H1 (cell line): ENCODE measurements at regions of chr20 and their contacts with region 1.

Region 1: DNA sequence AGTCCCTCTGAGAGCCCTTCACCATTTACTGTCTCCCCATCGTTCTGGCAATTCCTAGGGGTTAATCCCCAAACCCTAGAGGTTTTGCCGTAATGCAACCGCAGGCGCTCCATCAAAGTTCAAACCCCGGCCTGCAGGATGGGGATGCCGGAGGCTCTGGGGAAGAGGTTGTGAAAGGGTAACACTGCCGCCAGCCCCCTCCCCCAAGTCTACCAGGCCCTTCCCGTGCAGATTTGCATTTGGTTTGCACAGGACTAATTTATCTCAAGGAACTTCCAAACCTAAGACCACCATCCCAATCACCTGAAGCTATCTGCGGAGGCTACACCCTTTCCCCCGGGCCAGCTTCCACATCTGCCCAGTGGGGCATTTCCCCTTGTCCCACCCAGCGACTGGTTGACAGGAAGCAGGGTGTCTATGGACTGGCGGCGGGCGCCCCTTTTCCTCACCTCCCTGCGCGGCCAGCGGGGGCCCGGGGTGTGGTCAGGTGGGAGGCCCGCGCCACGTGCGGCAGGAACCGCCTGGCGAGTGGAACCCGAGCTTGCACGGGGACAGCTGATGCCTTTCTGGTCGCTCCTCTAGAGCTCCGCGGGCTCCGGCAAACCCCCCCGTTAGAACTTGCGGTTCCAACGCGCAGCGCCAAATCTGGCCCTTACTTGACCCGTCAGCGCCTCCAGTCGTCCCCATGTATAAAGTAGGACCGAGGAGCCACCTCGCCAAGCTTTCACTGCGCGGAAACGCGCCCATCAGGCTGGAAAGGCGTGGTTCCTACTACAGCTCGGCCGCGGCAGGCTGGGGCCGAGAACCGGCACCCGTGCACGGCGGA is 9.4 kb upstream of the SLC4A11 start:
- DNase-seq: peak in 1 of 2 experiments; percentile 74
- H3K4me3 ChIP-seq: peak overlapping the region; percentile 9 to 61 (median 40)
- H3K27ac ChIP-seq: no peak overlapping the region
- H3K4me1 ChIP-seq: peaks cover 0 to 5% (median 1%) of the 10 kb centered on the region in 4 experiments; a peak in 3 of 7 replicates
- H3K27me3 ChIP-seq: peaks cover 0 to 24% (median 18%) of the 10 kb centered on the region in 4 experiments; a peak in 6 of 7 replicates
- CTCF ChIP-seq: peak in 2 of 3 experiments; percentile 12 to 23; a peak in 2 of 4 replicates
- EP300 ChIP-seq: no peak
- POLR2A ChIP-seq: no peak
- RAD21 ChIP-seq: peak; percentile 21 to 44; a peak in 1 of 4 replicates

Region 2: GRCh38 chr20:3218307-3218988 is 29.9 kb before region 1 on chr20:
- CTCF ChIA-PET with region 1: interaction called, 158 read pairs
- POLR2A ChIA-PET with region 1: interaction called, 46 read pairs
- DNase-seq: peak in 1 of 2 experiments; percentile 98
- H3K4me3 ChIP-seq: no peak overlapping the region
- H3K27ac ChIP-seq: no peak overlapping the region
- H3K4me1 ChIP-seq: peaks cover 0 to 2% (median 0%) of the 10 kb centered on the region in 4 experiments; a peak in 2 of 7 replicates
- H3K27me3 ChIP-seq: no peaks in the 10 kb centered on the region
- CTCF ChIP-seq: peak; percentile 86 to 90 (median 89)
- EP300 ChIP-seq: peak in 1 of 2 experiments; percentile 19; a peak in 1 of 3 replicates
- POLR2A ChIP-seq: no peak
- RAD21 ChIP-seq: peak; percentile 72 to 88

Region 3: GRCh38 chr20:3227506-3227905 is 20.9 kb before region 1 on chr20:
- CTCF ChIA-PET with region 1: interaction called, 158 read pairs
- POLR2A ChIA-PET with region 1: interaction called, 46 read pairs
- DNase-seq: no peak
- H3K4me3 ChIP-seq: no peak overlapping the region
- H3K27ac ChIP-seq: no peak overlapping the region; the same call in 1 of the 2 replicates
- H3K4me1 ChIP-seq: no peaks in the 10 kb centered on the region; a peak in 1 of 7 replicates
- H3K27me3 ChIP-seq: no peaks in the 10 kb centered on the region
- CTCF ChIP-seq: no peak
- EP300 ChIP-seq: no peak
- POLR2A ChIP-seq: no peak
- RAD21 ChIP-seq: no peak

Region 4: DNA sequence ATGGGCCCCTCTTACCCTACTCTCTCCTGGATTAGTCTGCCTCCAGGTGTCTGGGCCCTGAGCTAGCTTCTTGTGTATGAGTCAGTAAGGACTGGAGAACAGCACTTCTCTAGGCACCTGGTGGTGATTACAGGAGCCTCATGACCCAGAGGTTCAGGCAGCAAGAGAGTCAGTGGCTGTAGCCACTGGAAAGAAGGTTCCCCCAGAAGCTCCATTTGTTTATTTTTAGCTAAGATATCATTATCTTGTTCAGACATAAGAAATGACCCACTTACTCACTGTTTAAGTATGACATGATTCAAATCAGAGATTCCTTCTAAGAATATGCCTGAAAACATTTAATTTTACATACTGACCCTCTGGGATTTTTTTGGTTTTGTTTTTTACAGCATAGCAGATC is 14.2 kb after region 1 on chr20:
- CTCF ChIA-PET with region 1: interaction called, 46 read pairs
- POLR2A ChIA-PET with region 1: interaction called, 3 read pairs
- DNase-seq: no peak
- H3K4me3 ChIP-seq: no peak overlapping the region
- H3K27ac ChIP-seq: no peak overlapping the region
- H3K4me1 ChIP-seq: no peaks in the 10 kb centered on the region
- H3K27me3 ChIP-seq: no peaks in the 10 kb centered on the region
- CTCF ChIP-seq: no peak
- EP300 ChIP-seq: no peak
- POLR2A ChIP-seq: no peak
- RAD21 ChIP-seq: no peak

Region 5: DNA sequence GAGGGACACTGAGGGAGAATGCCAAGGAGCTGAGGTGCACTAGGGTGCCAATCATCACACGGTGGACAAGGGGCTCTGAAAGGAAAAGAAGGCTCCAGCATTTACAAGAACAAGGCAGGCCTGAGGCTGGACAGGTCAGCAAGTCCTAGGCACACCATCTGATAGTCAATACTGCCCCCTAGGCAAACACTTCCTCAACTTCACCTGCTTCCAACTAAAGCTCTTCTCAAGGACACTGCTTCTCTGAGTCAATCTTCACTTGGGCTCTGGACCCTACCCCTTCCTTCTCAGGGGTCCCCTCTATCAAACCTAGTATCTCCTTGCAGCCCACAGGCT is 28.3 kb after region 1 on chr20:
- CTCF ChIA-PET with region 1: interaction called, 111 read pairs
- POLR2A ChIA-PET with region 1: no interaction called
- DNase-seq: no peak
- H3K4me3 ChIP-seq: no peak overlapping the region
- H3K27ac ChIP-seq: no peak overlapping the region
- H3K4me1 ChIP-seq: no peaks in the 10 kb centered on the region
- H3K27me3 ChIP-seq: no peaks in the 10 kb centered on the region
- CTCF ChIP-seq: peak; percentile 33 to 74 (median 67)
- EP300 ChIP-seq: no peak
- POLR2A ChIP-seq: no peak
- RAD21 ChIP-seq: peak; percentile 66 to 80

Region 6: DNA sequence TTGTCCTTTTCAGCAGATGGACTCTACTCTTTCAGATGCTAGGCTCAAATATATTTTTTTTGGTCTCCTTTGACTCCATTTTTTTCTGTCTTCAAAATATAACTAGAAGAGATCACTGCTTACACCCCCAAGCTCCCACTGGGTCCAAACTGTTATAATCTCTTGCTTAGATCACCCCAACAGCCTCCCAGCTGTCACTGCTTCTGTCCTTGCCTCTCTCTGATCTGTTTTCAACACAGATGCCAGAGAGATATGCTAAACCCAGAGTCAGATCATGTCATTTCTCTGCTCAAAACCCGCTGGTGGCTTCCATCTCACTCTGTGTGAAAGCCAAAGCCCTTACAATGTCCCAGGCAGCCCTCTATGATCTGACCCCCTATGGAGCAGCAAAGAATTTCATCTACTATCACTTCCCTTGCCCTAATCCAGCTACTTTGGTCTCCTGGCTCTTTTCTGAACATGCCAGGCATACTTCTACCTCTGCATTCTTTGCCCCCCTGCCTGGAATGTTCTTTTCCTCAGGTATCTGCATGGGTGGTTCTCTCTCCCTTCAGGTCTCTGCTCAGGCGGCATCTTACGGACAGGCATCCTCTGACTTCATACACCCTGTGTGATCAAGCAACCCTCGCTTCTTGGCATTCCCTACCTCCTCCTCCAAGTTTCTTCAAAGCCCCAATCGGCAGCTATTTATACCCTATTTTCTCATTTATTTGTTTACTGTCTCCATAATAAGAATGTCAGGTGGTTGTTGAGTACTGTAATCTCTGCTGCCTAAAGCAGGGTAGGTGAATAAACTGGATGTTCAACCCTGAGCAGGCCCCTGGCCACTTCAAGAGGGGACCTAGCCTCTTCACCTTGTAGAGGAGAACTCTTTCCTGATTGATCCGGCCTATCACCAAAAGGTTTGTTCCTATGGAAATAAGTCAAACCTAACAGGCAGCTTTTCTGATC is 34.2 kb after region 1 on chr20:
- CTCF ChIA-PET with region 1: interaction called, 111 read pairs
- POLR2A ChIA-PET with region 1: interaction called, 3 read pairs
- DNase-seq: peak in 1 of 2 experiments; percentile 10
- H3K4me3 ChIP-seq: no peak overlapping the region
- H3K27ac ChIP-seq: no peak overlapping the region; the same call in 1 of the 2 replicates
- H3K4me1 ChIP-seq: peaks cover 0 to 8% (median 5%) of the 10 kb centered on the region in 4 experiments; a peak in 1 of 7 replicates
- H3K27me3 ChIP-seq: no peaks in the 10 kb centered on the region
- CTCF ChIP-seq: no peak
- EP300 ChIP-seq: no peak
- POLR2A ChIP-seq: no peak
- RAD21 ChIP-seq: no peak

Region 7: GRCh38 chr20:3312940-3313682 is 64.7 kb after region 1 on chr20:
- CTCF ChIA-PET with region 1: interaction called, 47 read pairs
- POLR2A ChIA-PET with region 1: no interaction called
- DNase-seq: no peak
- H3K4me3 ChIP-seq: no peak overlapping the region
- H3K27ac ChIP-seq: no peak overlapping the region
- H3K4me1 ChIP-seq: no peaks in the 10 kb centered on the region; a peak in 1 of 7 replicates
- H3K27me3 ChIP-seq: no peaks in the 10 kb centered on the region
- CTCF ChIP-seq: no peak
- EP300 ChIP-seq: no peak
- POLR2A ChIP-seq: no peak
- RAD21 ChIP-seq: no peak

Region 8: DNA sequence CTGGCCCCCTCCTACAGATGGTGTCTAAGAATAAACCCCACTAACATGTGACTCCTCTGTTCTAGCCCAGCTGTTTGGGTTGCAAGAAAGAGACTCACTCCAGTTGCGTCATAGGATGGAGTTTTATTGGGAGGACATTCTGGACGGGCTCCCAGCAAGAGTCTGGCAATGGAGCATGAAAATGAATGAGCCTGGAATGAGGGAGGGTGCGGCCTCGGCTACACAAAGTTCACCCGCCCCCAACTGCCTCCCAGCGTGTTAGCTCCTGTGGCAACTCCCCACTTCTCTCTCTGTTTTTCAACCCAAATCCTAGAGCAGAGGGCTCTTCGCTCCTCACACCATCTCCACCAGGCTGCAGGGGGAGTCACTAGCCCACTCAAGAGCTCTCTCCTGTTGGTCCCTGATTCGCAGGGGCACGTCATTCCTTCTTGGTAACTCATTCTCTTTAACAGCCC is 438.5 kb after region 1 on chr20:
- CTCF ChIA-PET with region 1: no interaction called
- POLR2A ChIA-PET with region 1: no interaction called
- DNase-seq: no peak
- H3K4me3 ChIP-seq: no peak overlapping the region
- H3K27ac ChIP-seq: no peak overlapping the region
- H3K4me1 ChIP-seq: peaks cover 3 to 10% (median 5%) of the 10 kb centered on the region in 4 experiments
- H3K27me3 ChIP-seq: peaks cover 0 to 9% (median 7%) of the 10 kb centered on the region in 4 experiments; a peak in 6 of 7 replicates
- CTCF ChIP-seq: peak; percentile 5 to 14 (median 8); a peak in 3 of 4 replicates
- EP300 ChIP-seq: no peak
- POLR2A ChIP-seq: no peak
- RAD21 ChIP-seq: peak in 1 of 2 experiments; percentile 42; a peak in 2 of 4 replicates